MCF 10A (cell line): ENCODE measurements at regions of chr3 and their contacts with region 1.

Region 1: DNA sequence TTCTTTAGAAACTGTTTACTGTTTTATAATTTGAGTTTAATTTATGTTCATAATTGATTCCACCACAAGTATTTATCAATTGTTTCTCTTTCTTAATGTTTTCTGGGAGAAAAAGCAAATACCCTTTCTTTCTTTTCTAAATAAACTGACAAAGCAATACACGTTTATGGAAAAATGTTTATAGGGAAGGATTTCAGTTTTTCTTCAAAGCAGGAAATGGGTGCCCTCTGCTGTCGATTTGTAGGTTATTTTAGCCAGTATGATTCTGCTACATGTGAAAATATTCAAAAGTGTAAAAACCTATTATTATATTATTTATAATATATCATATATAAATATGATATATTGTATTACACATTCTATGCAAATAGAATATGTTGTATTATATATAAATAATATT is 921.0 kb upstream of the ROBO1 start:
- DNase-seq: peak; percentile 34
- H3K4me3 Mint-ChIP-seq: no peak overlapping the region
- H3K27ac Mint-ChIP-seq: no peak overlapping the region
- H3K4me1 Mint-ChIP-seq: no peaks in the 10 kb centered on the region
- H3K27me3 Mint-ChIP-seq: peaks cover 11% of the 10 kb centered on the region
- CTCF ChIP-seq: peak; percentile 45

Region 2: GRCh38 chr3:80060664-80061063 is 628.1 kb before region 1 on chr3:
- CTCF ChIA-PET with region 1: interaction called, 3 read pairs
- POLR2A ChIA-PET with region 1: no interaction called
- intact Hi-C with region 1: loop called (anchors 5 kb)
- DNase-seq: peak; percentile 4
- H3K4me3 Mint-ChIP-seq: no peak overlapping the region
- H3K27ac Mint-ChIP-seq: no peak overlapping the region
- H3K4me1 Mint-ChIP-seq: no peaks in the 10 kb centered on the region
- H3K27me3 Mint-ChIP-seq: no peaks in the 10 kb centered on the region
- CTCF ChIP-seq: no peak

Region 3: DNA sequence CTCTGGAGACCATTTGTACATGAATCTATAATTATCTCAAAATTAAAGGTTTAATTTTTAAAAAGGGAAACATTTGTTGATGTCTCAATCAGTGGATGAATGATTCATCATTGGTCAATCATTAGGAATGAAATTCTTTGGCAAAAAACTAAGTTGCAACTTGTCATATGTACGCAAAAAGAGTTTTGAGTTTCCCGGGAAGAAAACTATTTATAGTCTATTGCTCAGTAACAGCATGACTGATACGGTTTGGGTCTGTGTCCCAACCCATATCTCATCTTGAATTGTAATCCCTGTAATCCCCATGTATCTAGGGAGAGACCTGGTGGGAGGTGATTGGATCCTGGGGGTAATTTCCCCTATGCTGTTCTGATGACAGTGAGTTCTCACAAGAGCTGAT is 155.3 kb before region 1 on chr3:
- CTCF ChIA-PET with region 1: no interaction called
- POLR2A ChIA-PET with region 1: no interaction called
- intact Hi-C with region 1: no loop called
- DNase-seq: peak; percentile 60
- H3K4me3 Mint-ChIP-seq: no peak overlapping the region
- H3K27ac Mint-ChIP-seq: peak overlapping the region; percentile 46
- H3K4me1 Mint-ChIP-seq: no peaks in the 10 kb centered on the region
- H3K27me3 Mint-ChIP-seq: peaks cover 23% of the 10 kb centered on the region
- CTCF ChIP-seq: no peak

Region 4: DNA sequence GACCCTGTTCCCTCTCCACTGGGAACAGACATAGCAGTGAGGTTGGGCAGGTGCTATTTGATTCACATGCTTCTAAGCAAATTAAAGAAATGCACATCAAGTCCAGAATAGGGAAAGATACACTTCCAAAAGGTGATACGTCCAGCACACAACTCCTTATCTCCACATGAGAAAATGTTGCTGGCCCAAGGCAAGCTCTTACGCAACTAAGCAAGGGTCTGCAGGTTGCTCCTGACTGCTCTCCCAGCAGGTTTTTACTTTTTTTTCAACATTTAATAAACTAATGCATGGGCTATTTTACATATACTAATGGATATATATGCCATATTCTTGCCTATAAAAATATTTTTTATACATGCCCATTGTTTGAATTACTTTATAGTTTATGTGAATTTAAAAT is 102.5 kb before region 1 on chr3:
- CTCF ChIA-PET with region 1: no interaction called
- POLR2A ChIA-PET with region 1: no interaction called
- intact Hi-C with region 1: no loop called
- DNase-seq: no peak
- H3K4me3 Mint-ChIP-seq: no peak overlapping the region
- H3K27ac Mint-ChIP-seq: no peak overlapping the region
- H3K4me1 Mint-ChIP-seq: no peaks in the 10 kb centered on the region
- H3K27me3 Mint-ChIP-seq: no peaks in the 10 kb centered on the region
- CTCF ChIP-seq: no peak

Region 5: DNA sequence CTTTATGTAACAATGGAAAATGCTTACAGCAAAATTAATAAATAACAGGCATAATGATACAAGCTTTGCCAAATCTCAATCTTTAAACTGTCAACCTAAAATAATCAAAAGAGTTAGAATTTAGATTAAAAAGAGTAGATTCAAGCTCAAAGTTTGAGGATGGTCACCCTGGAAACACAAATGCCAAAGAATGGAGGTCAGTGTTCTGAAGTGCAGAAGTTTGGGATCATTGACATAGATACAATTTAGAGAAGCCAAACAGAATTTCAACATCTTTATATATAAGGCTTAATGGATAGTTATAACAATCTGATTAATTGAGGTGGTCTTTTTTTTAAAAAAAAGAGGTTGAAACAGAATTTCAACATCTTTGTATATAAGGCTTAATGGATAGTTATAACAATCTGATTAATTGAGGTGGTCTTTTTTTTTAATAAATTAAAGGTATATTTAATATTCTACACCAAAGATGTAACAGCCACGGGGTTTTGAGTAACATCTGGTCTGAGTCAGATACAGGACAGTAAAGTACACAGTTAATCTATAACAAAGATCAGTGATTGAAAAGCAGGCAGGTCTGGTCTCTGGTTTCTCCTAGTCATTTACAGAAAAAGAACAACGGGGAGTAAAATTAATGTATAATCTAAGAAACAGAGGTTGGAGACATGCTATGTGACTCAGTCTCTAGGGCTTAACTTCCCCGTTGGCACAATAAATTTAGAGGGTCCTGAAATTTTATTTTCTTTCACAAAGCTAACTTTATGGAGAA is 582.0 kb after region 1 on chr3:
- CTCF ChIA-PET with region 1: no interaction called
- POLR2A ChIA-PET with region 1: no interaction called
- intact Hi-C with region 1: no loop called
- DNase-seq: no peak
- H3K4me3 Mint-ChIP-seq: no peak overlapping the region
- H3K27ac Mint-ChIP-seq: no peak overlapping the region
- H3K4me1 Mint-ChIP-seq: no peaks in the 10 kb centered on the region
- H3K27me3 Mint-ChIP-seq: peaks cover 94% of the 10 kb centered on the region
- CTCF ChIP-seq: no peak